Endothelial cell of umbilical vein (primary cell): ENCODE measurements at regions of chr20 and their contacts with region 1.

Region 1: DNA sequence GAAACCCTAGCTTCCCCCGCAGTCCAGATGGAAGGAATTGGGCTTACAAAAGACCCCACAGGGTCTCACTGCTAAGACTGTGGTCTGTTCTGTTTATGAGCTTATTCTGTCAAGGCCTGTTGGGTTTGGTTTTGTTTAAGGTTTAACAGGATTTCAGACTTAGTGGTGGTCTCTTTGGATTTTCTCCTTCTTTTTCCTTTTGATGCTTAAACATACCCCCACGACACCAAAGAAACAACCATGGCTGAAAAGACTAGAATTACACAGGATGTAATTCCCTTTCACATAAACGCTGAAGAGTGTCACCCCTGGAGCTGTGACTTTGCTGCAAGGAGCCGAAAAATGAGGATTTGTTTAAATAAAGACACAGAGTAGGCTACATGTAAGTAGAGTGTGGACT is 408.6 kb downstream of the PREX1 start:
- DNase-seq: no peak
- H3K4me3 ChIP-seq: no peak overlapping the region
- H3K27ac ChIP-seq: no peak overlapping the region
- H3K4me1 ChIP-seq: no peaks in the 10 kb centered on the region
- H3K27me3 ChIP-seq: peaks cover 0 to 2% of the 10 kb centered on the region in 2 experiments
- CTCF ChIP-seq: no peak
- POLR2A ChIP-seq: no peak

Region 2: DNA sequence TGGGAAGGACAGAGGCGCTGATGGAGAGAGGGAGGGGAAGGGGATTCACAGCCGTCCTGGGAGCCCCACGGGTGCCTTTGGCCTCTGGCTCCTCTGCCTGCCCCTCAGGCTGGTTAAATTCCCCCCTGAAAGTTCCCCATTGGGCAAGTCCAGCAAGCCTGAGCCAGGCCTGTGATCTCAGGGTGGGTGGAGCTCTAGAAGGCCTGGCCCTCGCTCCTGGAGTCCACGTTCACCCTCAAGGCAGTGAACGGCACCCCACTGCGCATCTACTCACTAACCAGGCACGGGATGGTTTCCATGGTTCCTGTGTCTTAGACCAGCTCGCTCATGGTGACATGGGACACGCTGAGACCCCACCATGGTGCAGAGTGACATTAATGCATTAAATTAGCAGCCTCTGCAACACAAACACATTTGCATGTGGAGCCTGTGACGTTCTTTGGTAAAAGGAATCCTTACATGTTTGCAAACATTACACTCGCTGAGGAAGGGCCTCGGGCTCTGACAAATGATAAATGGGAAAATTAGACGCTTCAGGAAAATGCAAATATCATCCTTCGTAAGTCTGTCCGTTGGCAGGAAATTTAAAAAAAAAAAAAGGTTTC is 44.1 kb before region 1 on chr20:
- CTCF ChIA-PET with region 1: no interaction called
- POLR2A ChIA-PET with region 1: no interaction called
- dilution Hi-C with region 1: no loop called
- intact Hi-C with region 1: no loop called
- DNase-seq: no peak
- H3K4me3 ChIP-seq: no peak overlapping the region
- H3K27ac ChIP-seq: peak overlapping the region; percentile 41
- H3K4me1 ChIP-seq: peaks cover 11% of the 10 kb centered on the region
- H3K27me3 ChIP-seq: peaks cover 0 to 2% of the 10 kb centered on the region in 2 experiments
- CTCF ChIP-seq: no peak
- POLR2A ChIP-seq: no peak

Region 3: GRCh38 chr20:48431653-48432516 is 12.7 kb after region 1 on chr20:
- CTCF ChIA-PET with region 1: no interaction called
- POLR2A ChIA-PET with region 1: no interaction called
- dilution Hi-C with region 1: no loop called
- intact Hi-C with region 1: no loop called
- DNase-seq: no peak
- H3K4me3 ChIP-seq: no peak overlapping the region
- H3K27ac ChIP-seq: no peak overlapping the region
- H3K4me1 ChIP-seq: no peaks in the 10 kb centered on the region
- H3K27me3 ChIP-seq: no peaks in the 10 kb centered on the region
- CTCF ChIP-seq: no peak
- POLR2A ChIP-seq: no peak

Region 4: GRCh38 chr20:48475967-48476366 is 56.8 kb after region 1 on chr20:
- CTCF ChIA-PET with region 1: interaction called, 3 read pairs
- POLR2A ChIA-PET with region 1: interaction called, 14 read pairs
- dilution Hi-C with region 1: no loop called
- intact Hi-C with region 1: no loop called
- DNase-seq: no peak
- H3K4me3 ChIP-seq: no peak overlapping the region
- H3K27ac ChIP-seq: no peak overlapping the region
- H3K4me1 ChIP-seq: no peaks in the 10 kb centered on the region
- H3K27me3 ChIP-seq: no peaks in the 10 kb centered on the region
- CTCF ChIP-seq: no peak
- POLR2A ChIP-seq: no peak

Region 5: DNA sequence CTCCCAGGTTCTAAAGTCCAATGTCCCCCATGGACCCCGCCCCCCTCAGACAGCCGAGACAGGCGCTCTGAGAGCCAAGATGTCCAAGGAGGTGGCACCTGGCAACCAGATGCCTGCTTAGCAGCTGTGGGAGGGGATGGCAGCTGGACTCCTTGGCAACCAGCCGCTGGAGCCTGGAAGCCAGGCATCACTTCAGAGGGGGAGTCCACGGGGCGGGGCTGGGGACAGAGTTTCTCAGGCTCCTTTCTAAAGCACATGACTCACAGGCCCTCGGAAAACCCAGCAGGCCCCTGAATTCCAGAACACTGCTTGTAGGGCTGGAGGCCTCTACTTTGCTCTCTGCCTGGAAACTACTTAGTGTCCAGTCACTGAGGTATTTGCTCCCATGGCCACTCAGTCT is 357.1 kb after region 1 on chr20:
- CTCF ChIA-PET with region 1: no interaction called
- POLR2A ChIA-PET with region 1: no interaction called
- dilution Hi-C with region 1: no loop called
- intact Hi-C with region 1: no loop called
- DNase-seq: no peak
- H3K4me3 ChIP-seq: no peak overlapping the region
- H3K27ac ChIP-seq: no peak overlapping the region
- H3K4me1 ChIP-seq: peaks cover 5% of the 10 kb centered on the region
- H3K27me3 ChIP-seq: no peaks in the 10 kb centered on the region
- CTCF ChIP-seq: no peak
- POLR2A ChIP-seq: no peak

Region 6: DNA sequence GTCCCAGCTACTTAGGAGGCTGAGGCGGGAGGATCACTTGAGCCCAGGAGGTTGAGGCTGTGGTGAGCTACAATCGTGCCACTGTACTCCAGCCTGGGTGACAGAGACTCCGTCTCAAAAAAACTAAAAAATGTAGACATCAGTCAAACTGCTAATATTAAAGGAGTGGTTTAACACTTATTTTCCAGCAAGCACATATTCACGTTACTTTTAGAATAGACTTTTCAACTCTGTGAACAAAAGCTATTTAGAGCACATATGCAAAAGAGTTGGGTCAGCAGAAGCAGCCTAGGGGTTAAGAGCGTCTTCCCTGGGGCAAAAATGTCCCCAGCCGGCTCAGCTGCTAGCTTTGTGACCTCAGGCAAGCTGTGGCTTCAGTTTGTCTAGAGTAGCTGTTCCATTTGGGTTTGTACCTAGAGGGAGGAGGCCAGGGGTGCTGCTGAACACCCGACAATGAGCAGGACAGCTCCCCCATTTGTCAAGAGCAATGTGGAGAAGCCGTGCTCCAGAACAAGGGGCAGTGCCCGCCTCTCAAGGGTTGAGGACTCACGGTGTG is 1211.3 kb after region 1 on chr20:
- CTCF ChIA-PET with region 1: no interaction called
- POLR2A ChIA-PET with region 1: no interaction called
- dilution Hi-C with region 1: no loop called
- intact Hi-C with region 1: no loop called
- DNase-seq: no peak
- H3K4me3 ChIP-seq: no peak overlapping the region
- H3K27ac ChIP-seq: no peak overlapping the region
- H3K4me1 ChIP-seq: no peaks in the 10 kb centered on the region
- H3K27me3 ChIP-seq: no peaks in the 10 kb centered on the region
- CTCF ChIP-seq: no peak
- POLR2A ChIP-seq: no peak